Esophagus squamous epithelium (tissue), 5 donors: ENCODE measurements at regions of chr6 and their contacts with region 1.

Region 1: DNA sequence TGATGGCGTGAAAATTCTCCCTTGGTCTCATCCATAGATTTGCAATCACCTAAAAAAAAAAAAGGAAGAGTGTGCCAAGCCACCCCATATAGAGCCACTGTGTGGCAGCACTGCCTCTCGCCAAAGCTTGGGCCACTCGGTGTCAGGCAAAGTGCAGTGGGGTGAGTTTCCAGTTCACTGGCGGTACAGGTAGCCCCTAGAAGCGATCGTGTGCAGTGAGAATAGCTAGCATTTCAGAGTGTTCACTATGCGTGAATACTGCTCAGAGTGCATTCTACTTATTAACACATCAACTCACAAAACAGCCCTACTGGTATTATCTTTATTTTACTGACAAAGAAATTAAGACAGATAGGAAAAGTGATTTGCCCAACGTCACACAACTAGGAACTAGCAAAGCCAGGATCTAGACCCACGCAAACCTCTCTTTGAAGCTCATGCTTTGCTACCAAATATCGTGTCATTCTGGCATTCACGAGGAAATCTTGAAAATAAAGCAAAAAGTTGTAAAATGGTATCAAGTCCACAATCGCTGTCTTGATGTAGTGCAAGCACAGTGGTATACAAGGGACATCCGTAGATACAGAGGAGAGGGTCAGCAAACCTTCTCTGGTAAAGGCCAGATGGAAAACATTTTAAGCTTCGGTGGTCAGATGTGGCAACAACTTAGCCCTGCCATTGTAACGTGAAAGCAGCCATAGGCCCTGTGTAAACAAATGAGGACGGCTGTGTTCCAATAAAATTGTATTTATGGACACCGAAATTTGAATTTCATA is 10.4 kb upstream of the GCNT2 start:
- DNase-seq: no peak
- H3K4me3 ChIP-seq: peak overlapping the region in 1 of 4 donors; percentile 27
- H3K27ac ChIP-seq: peak overlapping the region in 1 of 4 donors; percentile 39
- H3K4me1 ChIP-seq: peaks cover 0 to 9% (median 7%) of the 10 kb centered on the region in 3 donors
- H3K27me3 ChIP-seq: no peaks in the 10 kb centered on the region
- CTCF ChIP-seq: peak; percentile 40 to 74 (median 63)
- POLR2A ChIP-seq: no peak

Region 2: DNA sequence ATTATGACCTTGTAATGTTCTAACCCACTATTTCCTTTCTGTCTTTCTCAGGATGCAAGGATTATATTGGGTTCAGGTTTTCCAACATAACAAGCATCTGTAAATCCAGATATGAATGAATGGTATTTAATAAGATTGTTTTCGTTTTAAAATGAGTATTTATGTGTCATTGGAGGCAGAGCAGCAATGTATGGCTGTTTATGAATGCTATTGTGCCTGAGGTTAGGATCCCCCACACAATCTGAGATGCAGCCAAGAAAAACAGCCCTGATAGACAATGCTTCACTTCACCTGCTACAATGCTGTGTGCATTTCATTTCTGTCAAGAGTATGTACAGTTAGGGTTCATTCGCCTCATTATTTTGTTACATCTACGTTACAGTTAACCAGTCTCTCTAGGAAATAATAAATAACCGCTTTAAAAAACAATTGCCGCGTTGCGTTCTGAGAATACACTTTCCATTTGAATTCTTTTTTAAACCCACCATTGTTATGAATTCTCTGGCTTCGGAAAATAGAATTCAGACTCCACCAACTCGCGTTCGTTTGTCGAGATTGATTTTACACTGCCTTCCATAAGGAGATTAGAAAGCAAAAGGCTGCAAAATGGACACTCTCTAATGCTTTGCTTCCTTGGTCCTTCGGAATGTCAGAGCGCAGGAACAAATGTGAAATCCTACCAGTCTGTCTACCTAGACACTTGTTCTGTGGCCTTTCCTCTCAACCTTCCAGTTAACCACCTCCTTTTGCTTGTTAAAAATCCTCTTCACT is 115.4 kb before region 1 on chr6:
- intact Hi-C with region 1: no loop called
- DNase-seq: no peak
- H3K4me3 ChIP-seq: no peak overlapping the region
- H3K27ac ChIP-seq: no peak overlapping the region
- H3K4me1 ChIP-seq: peaks cover 0 to 15% (median 0%) of the 10 kb centered on the region in 3 donors
- H3K27me3 ChIP-seq: peaks cover 0 to 100% (median 2%) of the 10 kb centered on the region in 4 donors
- CTCF ChIP-seq: no peak
- POLR2A ChIP-seq: no peak

Region 3: DNA sequence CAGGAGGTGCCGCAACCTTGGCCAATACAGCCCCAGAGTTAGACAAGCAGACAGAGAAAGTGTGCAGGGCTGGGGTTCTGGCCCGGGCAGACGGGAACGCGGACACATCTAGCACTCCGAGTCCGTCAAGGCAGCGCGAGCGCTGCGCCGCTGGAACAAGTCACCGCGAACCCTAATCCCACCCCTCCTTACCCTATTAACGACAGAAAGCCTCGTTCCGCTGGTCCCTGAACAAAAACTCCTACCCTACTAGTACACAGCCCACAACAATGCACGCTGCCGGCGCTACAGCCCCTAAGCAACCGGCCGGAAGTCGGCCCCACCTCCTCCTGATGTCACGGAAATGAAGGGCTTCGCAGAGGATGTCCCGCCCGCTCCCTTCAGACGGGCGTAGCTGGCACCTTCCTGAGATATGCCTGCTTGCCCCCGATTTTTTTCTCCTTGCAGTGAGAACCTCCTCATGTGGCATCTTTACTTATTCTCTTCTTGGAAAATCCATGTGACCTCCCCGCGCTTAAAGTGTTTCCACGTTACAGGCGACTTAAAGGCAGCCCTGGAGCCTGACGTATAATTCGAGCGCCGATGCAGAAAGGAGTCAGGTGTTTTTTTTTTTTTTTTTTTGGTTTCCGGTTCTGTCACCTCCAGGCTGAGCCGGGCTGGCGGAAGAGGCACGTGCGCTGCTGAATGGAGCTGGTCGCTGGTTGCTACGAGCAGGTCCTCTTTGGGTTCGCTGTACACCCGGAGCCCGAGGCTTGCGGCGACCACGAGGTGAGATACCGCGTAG is 183.7 kb after region 1 on chr6 and contains the starts of genes C6orf52 and PAK1IP1:
- intact Hi-C with region 1: loop called (anchors 10 kb)
- DNase-seq: peak; percentile 78
- H3K4me3 ChIP-seq: peak within 1 kb of the TSS; percentile 63 to 90 (median 76)
- H3K27ac ChIP-seq: peak within 1 kb of the TSS; percentile 90 to 99 (median 96)
- H3K4me1 ChIP-seq: peaks cover 12 to 63% (median 16%) of the 10 kb centered on the region in 3 donors
- H3K27me3 ChIP-seq: no peaks in the 10 kb centered on the region
- CTCF ChIP-seq: peak in 2 of 6 experiments; percentile 2 to 10
- POLR2A ChIP-seq: peak in 3 of 4 donors; percentile 81 to 92 (median 88)
- total RNA-seq, gene C6orf52: not detected
- total RNA-seq, gene PAK1IP1: 11.4 to 23.6 (median 19.4) TPM